Panc1 (cell line): ENCODE measurements at regions of chr2 and their contacts with region 1.

Region 1: DNA sequence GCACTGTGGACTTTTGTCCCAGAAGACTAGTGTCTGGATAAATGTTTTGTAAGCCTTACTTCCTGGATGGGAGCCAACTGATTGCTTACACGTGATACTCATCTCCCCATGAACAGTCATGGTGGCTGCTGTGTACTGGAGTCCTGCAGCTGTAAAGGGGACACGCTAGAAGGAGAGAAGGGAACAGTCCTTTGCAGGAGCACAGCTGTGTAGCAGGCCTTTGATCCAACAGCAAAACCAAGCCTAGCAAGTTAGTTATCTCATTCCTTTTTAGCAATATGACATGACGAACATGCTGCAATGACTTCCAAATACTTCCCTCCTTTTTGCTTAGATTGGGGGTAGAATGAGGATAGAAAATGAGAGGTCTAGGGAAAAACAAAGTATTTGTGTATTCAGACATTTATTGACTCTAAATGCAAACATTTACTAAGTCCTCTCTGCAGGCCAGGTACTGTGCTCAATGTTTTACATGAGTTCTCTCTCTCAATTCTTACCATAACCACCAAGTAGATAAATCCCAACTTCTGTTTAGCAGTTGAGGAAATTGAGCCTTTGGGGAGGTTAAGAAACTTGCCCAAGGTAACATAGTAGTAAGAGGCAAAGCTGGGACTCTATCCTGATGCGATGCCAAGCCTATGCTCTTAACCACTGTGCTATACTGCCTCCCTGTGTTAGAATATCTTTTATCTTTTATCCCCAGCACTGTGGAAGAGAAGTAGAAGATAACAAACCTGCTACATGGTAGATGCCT is 55.4 kb upstream of the CD28 start:
- DNase-seq: peak; percentile 57
- ATAC-seq: peak; percentile 95
- H3K4me3 ChIP-seq: no peak overlapping the region
- H3K27ac ChIP-seq: no peak overlapping the region
- H3K4me1 ChIP-seq: peaks cover 14% of the 10 kb centered on the region; the same call in 1 of the 2 replicates
- H3K27me3 ChIP-seq: no peaks in the 10 kb centered on the region
- CTCF ChIP-seq: no peak; the same call in 1 of the 2 replicates

Region 2: DNA sequence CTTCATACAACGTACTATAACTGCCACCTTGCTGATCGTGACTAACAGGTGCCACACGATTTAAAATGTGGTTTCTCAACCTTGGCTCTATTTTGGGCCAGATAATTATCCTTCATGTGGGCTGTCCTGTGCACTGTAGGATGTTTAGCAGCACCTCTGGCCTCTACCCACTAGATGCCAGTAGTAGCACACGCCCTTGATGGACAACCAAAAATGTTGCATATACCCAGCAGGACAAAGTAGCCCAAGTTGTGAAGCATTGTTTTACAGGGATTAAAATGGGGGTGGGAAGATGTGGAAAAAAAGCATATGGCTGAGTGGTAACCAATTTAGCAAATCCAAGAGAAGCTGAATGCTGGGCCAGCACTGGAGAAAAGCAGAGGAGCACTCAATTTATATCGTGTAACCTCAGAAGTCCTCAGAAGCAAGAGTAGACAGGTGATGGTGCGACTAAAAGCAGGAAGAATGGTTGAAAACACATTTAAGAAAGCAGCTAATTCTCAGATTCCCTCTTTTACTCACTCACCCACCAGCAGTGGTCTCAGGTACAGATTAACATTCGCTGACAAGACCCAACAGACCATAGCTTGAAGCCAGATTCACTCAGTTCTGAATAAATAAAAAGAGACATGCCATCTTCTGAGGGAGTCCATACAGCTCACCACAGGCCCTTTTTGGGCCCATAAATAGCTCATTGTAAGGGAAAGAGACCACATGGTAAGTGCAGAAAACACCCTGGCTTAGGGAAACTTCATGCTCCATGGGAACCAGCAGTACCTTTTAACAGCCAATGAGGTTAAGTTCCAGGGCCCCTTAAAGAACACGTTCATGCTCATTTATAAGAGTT is 166.5 kb before region 1 on chr2:
- CTCF ChIA-PET with region 1: no interaction called
- POLR2A ChIA-PET with region 1: no interaction called
- in situ Hi-C with region 1: no loop called
- intact Hi-C with region 1: loop called (anchors 1 kb)
- DNase-seq: peak; percentile 45
- ATAC-seq: peak; percentile 88
- H3K4me3 ChIP-seq: no peak overlapping the region
- H3K27ac ChIP-seq: no peak overlapping the region
- H3K4me1 ChIP-seq: no peaks in the 10 kb centered on the region
- H3K27me3 ChIP-seq: no peaks in the 10 kb centered on the region
- CTCF ChIP-seq: peak; percentile 81